ENCODE measurements at regions of chr10 and their contacts with region 1.

Region 1: DNA sequence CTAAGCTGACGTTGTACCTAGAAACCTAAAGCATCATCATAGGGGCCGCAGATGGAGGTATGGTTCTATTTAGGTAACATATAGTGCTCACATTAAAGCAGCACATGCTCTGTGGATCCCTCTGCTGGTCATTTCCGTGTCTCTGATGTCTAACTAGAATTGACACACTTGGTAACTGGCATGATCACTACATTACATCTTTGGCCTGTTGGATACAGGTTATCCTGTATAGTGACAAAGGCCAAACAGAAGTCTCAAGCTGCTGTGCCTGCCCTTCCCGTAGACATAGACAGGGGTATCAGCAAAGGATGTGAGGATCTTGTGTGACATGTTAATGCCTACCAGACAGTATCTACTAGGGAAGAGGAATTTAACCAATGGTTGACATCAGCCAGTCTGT is 51.2 kb downstream of the KIF5B start:
- DNase-seq: peak in 1 of 2 experiments; percentile 57
- H3K4me3 ChIP-seq: no peak overlapping the region
- H3K27ac ChIP-seq: no peak overlapping the region
- H3K4me1 ChIP-seq: peaks cover 6 to 24% (median 15%) of the 10 kb centered on the region in 4 experiments; a peak in 6 of 7 replicates
- H3K27me3 ChIP-seq: no peaks in the 10 kb centered on the region
- CTCF ChIP-seq: peak in 2 of 3 experiments; percentile 55 to 77; a peak in 3 of 4 replicates
- EP300 ChIP-seq: no peak
- POLR2A ChIP-seq: peak in 1 of 2 experiments; percentile 49; a peak in 1 of 3 replicates
- RAD21 ChIP-seq: peak; percentile 58 to 70

Region 2: GRCh38 chr10:31836569-31837406 is 168.3 kb before region 1 on chr10:
- CTCF ChIA-PET with region 1: interaction called, 25 read pairs
- POLR2A ChIA-PET with region 1: no interaction called
- DNase-seq: no peak
- H3K4me3 ChIP-seq: no peak overlapping the region
- H3K27ac ChIP-seq: no peak overlapping the region
- H3K4me1 ChIP-seq: peaks cover 0 to 4% (median 0%) of the 10 kb centered on the region in 4 experiments; a peak in 1 of 7 replicates
- H3K27me3 ChIP-seq: no peaks in the 10 kb centered on the region
- CTCF ChIP-seq: peak; percentile 58 to 78 (median 64)
- EP300 ChIP-seq: no peak
- POLR2A ChIP-seq: no peak
- RAD21 ChIP-seq: peak; percentile 84 to 86

Region 3: DNA sequence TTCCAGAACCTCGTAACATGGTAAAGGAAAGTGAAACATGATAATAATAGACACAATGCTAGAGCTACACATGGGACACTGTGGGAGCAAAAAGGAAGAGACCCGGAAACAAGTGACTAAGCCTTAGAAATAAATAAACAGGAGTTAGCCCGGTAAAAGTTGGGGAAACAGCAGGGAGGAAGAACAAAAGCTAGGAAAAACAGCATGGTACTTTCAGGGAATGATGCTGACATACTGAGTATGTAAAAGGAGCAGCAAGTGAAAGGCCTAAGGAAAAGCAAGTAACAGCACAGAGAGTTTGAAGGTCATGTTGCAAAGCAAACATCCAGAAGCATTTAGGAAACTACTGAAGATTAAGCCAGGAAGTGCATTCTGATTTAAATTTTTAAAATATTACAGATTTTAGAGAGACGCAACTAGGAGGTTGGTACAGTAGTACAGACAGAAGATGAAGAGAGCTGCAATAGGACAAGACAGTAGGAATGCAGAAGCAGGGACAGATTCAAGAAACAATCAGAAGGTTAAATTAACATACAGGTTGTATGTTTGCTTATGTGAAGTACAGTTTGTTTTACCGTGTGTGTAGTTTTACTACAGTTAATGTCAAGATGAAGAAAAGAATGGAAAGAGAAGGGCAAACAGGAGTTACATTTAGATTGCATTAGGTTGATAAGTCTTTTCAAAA is 140.1 kb before region 1 on chr10:
- CTCF ChIA-PET with region 1: interaction called, 52 read pairs
- POLR2A ChIA-PET with region 1: interaction called, 4 read pairs
- DNase-seq: peak in 1 of 2 experiments; percentile 10
- H3K4me3 ChIP-seq: peak overlapping the region in 1 of 4 experiments; percentile 32; a peak in 3 of 8 replicates
- H3K27ac ChIP-seq: no peak overlapping the region
- H3K4me1 ChIP-seq: peaks cover 0 to 8% (median 4%) of the 10 kb centered on the region in 4 experiments; a peak in 5 of 7 replicates
- H3K27me3 ChIP-seq: no peaks in the 10 kb centered on the region
- CTCF ChIP-seq: no peak
- EP300 ChIP-seq: 0 out of 3 replicates have a peak, but pooled peaks of 1 of the 2 experiments have one; percentile 39
- POLR2A ChIP-seq: no peak
- RAD21 ChIP-seq: no peak

Region 4: DNA sequence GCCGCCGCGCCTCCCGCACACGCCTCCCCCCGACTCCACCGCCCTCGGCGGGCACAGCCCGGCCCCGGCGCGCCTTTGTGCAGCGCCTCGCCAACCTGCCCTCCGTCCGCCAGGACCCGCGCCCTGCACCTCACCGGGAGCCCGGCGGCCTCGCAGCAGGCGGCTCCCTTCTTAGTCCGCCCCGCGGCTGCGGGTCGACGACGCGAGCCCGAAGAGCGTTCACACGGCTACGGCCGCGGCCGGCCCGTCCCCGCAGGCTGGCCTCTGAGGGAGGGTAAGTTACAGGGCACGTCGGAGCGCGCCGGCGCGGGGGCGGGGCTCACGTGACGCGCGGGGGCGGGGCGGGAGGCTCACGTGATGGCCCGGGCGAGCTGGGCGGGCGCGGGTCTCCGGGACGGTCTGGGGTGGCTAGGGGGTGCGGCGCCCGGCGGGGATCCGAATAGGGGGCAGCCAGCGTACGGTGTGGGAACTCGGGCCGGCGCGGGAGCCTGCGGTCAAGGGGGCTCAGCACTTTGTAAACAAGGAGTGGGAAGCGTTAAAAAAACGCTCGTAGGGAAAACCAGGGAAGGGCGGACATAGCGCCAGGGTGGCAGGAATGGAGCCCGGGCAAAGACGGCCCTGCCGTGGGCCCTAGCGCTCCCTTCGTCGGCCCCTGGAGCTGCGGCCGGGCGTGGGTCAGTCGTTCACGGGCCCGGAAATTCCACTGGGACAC is 76.3 kb before region 1 on chr10 and contains the start of gene ARHGAP12:
- CTCF ChIA-PET with region 1: interaction called, 4 read pairs
- POLR2A ChIA-PET with region 1: interaction called, 11 read pairs
- DNase-seq: peak in 1 of 2 experiments; percentile 97
- H3K4me3 ChIP-seq: peak within 1 kb of the TSS; percentile 76 to 93 (median 90)
- H3K27ac ChIP-seq: peak within 1 kb of the TSS; percentile 88; the same call in 1 of the 2 replicates
- H3K4me1 ChIP-seq: peaks cover 0 to 7% (median 0%) of the 10 kb centered on the region in 4 experiments; a peak in 3 of 7 replicates
- H3K27me3 ChIP-seq: no peaks in the 10 kb centered on the region
- CTCF ChIP-seq: no peak
- EP300 ChIP-seq: no peak
- POLR2A ChIP-seq: peak; percentile 87 to 88
- RAD21 ChIP-seq: no peak; a peak in 1 of 4 replicates
- total RNA-seq, gene ARHGAP12: 39.0 and 40.9 TPM in 2 replicates

Region 5: GRCh38 chr10:31982111-31982510 is 22.9 kb before region 1 on chr10:
- CTCF ChIA-PET with region 1: interaction called, 12 read pairs
- POLR2A ChIA-PET with region 1: interaction called, 3 read pairs
- DNase-seq: no peak
- H3K4me3 ChIP-seq: no peak overlapping the region
- H3K27ac ChIP-seq: no peak overlapping the region
- H3K4me1 ChIP-seq: no peaks in the 10 kb centered on the region; a peak in 1 of 7 replicates
- H3K27me3 ChIP-seq: no peaks in the 10 kb centered on the region
- CTCF ChIP-seq: no peak
- EP300 ChIP-seq: no peak
- POLR2A ChIP-seq: no peak
- RAD21 ChIP-seq: no peak

Region 6: DNA sequence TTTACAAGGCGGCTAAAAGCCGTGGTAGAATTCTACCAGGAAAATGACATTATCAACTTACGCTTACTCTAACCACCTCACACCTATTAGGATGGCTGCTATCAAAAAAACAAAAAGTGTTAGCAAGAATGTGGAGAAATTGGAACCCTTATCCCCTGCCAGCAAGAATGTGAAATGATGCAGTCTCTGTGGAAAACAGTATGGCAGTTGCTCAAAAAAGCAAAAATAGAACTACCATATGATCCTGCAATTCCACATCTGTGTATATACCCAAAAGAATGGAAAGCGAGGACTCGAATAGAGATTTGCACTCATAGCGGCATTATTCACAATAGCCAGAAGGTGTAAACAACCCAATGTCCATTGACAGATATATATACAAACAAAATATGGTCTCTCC is 10.1 kb before region 1 on chr10:
- CTCF ChIA-PET with region 1: interaction called, 9 read pairs
- POLR2A ChIA-PET with region 1: interaction called, 10 read pairs
- DNase-seq: no peak
- H3K4me3 ChIP-seq: no peak overlapping the region
- H3K27ac ChIP-seq: no peak overlapping the region
- H3K4me1 ChIP-seq: peaks cover 0 to 5% (median 0%) of the 10 kb centered on the region in 4 experiments; a peak in 2 of 7 replicates
- H3K27me3 ChIP-seq: no peaks in the 10 kb centered on the region
- CTCF ChIP-seq: no peak
- EP300 ChIP-seq: no peak
- POLR2A ChIP-seq: no peak
- RAD21 ChIP-seq: no peak

Measured in H1 (cell line).